ENCODE measurements at regions of chr12 and their contacts with region 1.

Region 1: DNA sequence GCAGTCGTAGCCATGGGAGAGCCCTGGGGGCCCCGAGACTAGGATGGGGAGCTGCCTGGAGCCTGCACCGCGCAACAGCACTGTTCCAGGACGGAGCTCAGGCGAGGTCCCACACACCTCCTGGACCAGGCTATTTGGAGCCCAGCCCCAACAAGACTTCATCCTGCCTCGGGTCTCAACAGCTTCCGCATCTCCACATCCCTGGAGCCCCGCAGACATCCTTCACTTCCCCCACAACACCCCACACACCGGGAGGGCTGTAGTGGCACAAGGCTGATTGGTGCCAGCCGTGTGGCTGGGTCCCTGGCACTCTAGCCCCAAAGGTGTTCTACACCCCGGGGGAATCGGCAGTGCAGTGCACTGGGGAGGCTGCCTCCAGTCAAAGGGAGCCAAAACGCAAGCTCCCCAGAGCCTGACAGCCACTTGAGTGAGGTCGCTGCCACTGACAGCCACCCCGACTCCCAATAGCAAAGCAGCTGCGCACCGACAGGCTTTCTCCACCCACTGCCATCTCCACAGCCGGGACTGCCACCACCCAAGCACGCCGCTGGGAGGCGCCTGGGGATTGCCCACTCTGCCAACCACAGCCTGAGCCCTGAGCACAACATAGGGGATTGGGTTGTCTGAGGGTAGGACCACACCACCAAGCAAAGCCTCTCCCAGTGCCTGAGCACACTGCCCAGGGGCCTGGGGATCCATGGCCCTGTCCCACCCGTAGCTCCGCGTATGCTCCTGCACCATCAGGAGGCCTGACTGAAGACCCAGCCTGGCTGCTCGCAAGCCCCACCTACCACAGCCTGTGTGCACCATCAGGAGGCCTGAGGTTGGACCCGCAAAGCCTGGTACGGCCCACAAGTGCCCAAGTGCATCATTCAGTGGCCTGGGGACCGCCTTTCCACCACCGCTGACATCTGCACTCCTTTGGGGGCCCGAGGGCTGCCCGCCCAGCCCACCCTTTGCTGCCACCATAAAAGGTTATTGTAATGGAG is 13.2 kb upstream of the KLRF1 start:
- ATAC-seq: peak in 4 of 8 experiments; percentile 27 to 98 (median 86)
- H3K4me3 ChIP-seq: no peak overlapping the region
- H3K27ac ChIP-seq: no peak overlapping the region
- H3K4me1 ChIP-seq: no peaks in the 10 kb centered on the region

Region 2: DNA sequence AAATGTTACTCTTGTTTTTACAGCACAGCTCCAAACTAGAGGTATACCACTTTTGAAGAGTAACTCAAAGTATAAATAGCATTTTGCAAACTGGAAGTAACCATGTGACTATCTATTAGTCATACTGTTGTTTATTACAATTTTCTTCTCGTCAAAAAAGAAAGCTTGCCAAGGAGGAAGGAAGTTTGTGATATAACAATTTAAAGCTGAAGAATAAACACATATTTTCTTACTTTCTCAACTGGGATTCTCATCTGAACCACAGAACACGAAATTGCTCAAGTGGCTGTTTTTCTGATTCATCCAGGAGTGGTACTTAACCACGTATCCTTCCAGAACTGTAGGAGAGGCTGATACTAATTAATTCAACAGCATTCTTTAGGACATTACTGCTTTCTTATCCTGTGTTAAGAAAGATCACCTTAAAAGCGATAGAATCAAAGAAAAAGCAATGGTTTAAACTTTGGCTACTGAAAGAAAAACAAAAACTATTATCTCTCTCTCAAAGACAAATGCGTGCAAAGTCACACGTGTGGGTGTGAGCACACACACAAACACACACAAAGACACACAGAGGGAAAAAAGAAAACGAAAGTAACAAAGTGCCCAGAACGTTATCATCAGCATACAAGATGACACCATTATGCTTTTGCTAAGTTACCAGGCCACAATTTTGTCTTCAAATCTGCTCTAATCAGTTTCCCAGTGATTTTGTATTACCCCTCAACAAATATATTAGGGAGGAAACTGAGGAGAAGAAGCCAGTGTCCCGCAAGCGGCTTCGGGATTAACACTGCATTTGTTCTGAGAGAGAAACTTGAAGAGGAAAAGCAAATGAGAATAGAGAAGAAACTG is 55.4 kb after region 1 on chr12 and contains the start of gene CLEC2B:
- in situ Hi-C with region 1: loop called in 1 of 9 experiments (anchors 10 kb)
- ATAC-seq: peak in 3 of 8 experiments; percentile 65 to 86 (median 84)
- H3K4me3 ChIP-seq: no peak within 1 kb of the TSS
- H3K27ac ChIP-seq: no peak within 1 kb of the TSS
- H3K4me1 ChIP-seq: peaks cover 0 to 2% of the 10 kb centered on the region in 2 donors
- total RNA-seq, gene CLEC2B: 0.05 to 91.0 (median 22.7) TPM in 6 of 8 experiments, not detected in the others

Region 3: GRCh38 chr12:9925708-9926393 is 111.7 kb after region 1 on chr12:
- in situ Hi-C with region 1: loop called in 1 of 9 experiments (anchors 25 kb)
- ATAC-seq: peak in 4 of 8 experiments; percentile 24 to 73 (median 63)
- H3K4me3 ChIP-seq: no peak overlapping the region
- H3K27ac ChIP-seq: no peak overlapping the region
- H3K4me1 ChIP-seq: no peaks in the 10 kb centered on the region

Region 4: DNA sequence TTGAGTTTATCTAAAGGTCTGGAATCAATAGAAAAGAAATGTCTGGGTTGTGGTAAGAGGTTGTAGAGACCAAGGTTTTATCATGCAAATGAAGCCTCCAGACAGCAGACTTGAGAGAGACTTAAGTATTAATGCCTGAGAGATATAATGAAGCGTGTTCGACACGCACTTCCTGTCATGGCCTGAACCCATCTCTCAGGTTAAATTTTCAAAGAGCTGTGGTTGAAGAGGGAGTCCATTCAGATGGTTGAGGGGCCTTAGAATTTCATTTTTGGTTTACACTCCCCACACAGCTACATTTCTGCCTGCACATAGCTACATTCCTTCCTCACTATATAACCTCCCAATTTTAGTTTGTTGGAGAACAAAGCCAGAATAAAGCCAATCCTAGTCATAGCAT is 147.0 kb after region 1 on chr12:
- in situ Hi-C with region 1: no loop called
- ATAC-seq: no peak
- H3K4me3 ChIP-seq: no peak overlapping the region
- H3K27ac ChIP-seq: no peak overlapping the region
- H3K4me1 ChIP-seq: no peaks in the 10 kb centered on the region

Region 5: GRCh38 chr12:10409387-10409786 is 595.3 kb after region 1 on chr12 and contains the start of gene KLRC4:
- in situ Hi-C with region 1: no loop called
- ATAC-seq: peak in 1 of 8 experiments; percentile 41
- H3K4me3 ChIP-seq: no peak within 1 kb of the TSS
- H3K27ac ChIP-seq: no peak within 1 kb of the TSS
- H3K4me1 ChIP-seq: no peaks in the 10 kb centered on the region
- total RNA-seq, gene KLRC4: 0.71 TPM in 1 of 8 experiments, not detected in the others

Measured in motor neuron (in vitro differentiated cells).